Right cardiac atrium (tissue), 5 donors: ENCODE measurements at regions of chr3 and their contacts with region 1.

Region 1: DNA sequence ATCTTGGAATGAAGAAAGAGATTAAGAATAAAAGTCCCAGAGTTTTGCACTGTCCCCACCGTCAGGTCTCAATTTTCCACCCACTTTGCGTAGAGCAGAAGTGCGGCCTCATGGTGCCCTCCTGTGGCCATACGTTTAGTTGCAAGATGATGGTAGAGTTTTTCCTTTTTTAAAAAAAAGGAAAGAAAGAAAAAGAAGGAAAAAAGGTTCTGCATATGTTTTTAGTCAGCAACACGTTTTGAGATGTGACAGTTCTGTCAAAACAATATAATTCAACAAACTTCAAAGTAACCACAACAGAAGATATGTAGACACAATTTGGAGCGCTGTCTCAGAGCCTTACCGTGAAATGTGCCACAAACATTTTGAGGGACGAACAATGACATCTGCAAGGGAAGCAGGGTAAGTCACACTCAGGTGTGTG is 24.6 kb downstream of the EBLN2 start:
- DNase-seq: peak in 1 of 3 donors; percentile 75
- ATAC-seq: peak; percentile 46 to 67
- H3K4me3 ChIP-seq: no peak overlapping the region
- H3K27ac ChIP-seq: no peak overlapping the region
- H3K4me1 ChIP-seq: no peaks in the 10 kb centered on the region
- H3K27me3 ChIP-seq: no peaks in the 10 kb centered on the region

Region 2: GRCh38 chr3:71875461-71875947 is 1210.6 kb before region 1 on chr3:
- intact Hi-C with region 1: loop called in 2 of 4 experiments (anchors 10 kb)
- DNase-seq: peak; percentile 71 to 87 (median 81)
- ATAC-seq: peak; percentile 93 to 94
- H3K4me3 ChIP-seq: no peak overlapping the region
- H3K27ac ChIP-seq: no peak overlapping the region
- H3K4me1 ChIP-seq: no peaks in the 10 kb centered on the region
- H3K27me3 ChIP-seq: no peaks in the 10 kb centered on the region

Region 3: DNA sequence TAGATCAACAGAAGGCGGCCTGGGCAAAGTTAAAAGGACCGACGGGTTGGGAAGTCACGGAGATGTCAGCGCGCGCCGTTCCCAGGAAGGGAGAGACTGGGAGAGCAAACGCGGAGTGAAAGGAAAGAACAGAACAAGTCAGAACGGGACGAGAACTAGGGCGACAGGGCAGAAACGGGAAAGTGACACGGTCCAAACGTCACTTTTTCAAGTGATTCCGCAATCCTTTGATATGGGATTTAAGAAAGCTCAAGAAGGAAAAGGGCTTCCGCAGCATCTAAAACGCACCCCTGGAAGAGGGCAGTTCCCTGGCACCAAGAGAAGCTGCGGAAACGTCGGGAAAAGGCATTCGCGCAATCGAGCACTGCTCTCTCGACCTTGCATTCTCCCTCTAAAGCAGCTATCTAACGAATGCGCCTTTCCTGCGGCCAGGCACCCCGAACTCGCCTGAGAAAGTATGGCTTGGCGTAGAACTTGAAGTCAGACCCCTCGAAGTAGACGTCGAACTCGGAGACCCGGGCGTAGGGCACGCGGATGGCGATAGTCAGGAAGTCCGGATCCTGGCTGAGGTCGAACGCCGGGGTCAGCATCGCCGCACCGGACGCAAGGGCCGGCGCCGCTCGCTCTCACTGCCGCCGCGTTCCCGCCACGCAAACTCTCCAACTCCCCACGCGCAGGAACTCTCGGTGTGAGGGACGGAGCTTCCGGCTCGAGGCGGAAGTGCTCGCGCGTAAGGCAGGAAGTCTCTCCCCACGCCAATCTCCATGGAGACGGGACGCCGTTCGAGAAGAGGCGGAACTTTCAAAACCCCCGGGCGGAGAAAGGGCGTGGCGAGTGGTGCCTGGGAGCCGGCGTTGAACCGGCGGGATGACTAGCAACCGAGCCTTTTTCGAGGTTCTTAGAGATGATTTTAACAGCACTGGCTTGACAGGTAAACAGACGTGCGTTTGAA is 238.1 kb before region 1 on chr3 and contains the start of gene SHQ1:
- intact Hi-C with region 1: loop called in 1 of 4 experiments (anchors 10 kb)
- DNase-seq: peak; percentile 97 to 99 (median 98)
- ATAC-seq: peak; percentile 99
- H3K4me3 ChIP-seq: peak within 1 kb of the TSS; percentile 96
- H3K27ac ChIP-seq: peak within 1 kb of the TSS; percentile 90
- H3K4me1 ChIP-seq: no peaks in the 10 kb centered on the region
- H3K27me3 ChIP-seq: no peaks in the 10 kb centered on the region
- total RNA-seq, gene SHQ1: 21.0 to 27.1 (median 22.8) TPM

Region 4: GRCh38 chr3:72938471-72939265 is 147.4 kb before region 1 on chr3:
- intact Hi-C with region 1: loop called in 1 of 4 experiments (anchors 10 kb)
- DNase-seq: peak in 2 of 3 donors; percentile 50 to 77
- ATAC-seq: peak; percentile 96
- H3K4me3 ChIP-seq: no peak overlapping the region
- H3K27ac ChIP-seq: peak overlapping the region; percentile 60
- H3K4me1 ChIP-seq: no peaks in the 10 kb centered on the region
- H3K27me3 ChIP-seq: no peaks in the 10 kb centered on the region